Astrocyte of the cerebellum (primary cell): ENCODE measurements at regions of chr9 and their contacts with region 1.

Region 1: GRCh38 chr9:127651697-127652610 is 39.9 kb downstream of the STXBP1 start:
- DNase-seq: no peak
- H3K4me3 ChIP-seq: no peak overlapping the region
- CTCF ChIP-seq: no peak

Region 2: DNA sequence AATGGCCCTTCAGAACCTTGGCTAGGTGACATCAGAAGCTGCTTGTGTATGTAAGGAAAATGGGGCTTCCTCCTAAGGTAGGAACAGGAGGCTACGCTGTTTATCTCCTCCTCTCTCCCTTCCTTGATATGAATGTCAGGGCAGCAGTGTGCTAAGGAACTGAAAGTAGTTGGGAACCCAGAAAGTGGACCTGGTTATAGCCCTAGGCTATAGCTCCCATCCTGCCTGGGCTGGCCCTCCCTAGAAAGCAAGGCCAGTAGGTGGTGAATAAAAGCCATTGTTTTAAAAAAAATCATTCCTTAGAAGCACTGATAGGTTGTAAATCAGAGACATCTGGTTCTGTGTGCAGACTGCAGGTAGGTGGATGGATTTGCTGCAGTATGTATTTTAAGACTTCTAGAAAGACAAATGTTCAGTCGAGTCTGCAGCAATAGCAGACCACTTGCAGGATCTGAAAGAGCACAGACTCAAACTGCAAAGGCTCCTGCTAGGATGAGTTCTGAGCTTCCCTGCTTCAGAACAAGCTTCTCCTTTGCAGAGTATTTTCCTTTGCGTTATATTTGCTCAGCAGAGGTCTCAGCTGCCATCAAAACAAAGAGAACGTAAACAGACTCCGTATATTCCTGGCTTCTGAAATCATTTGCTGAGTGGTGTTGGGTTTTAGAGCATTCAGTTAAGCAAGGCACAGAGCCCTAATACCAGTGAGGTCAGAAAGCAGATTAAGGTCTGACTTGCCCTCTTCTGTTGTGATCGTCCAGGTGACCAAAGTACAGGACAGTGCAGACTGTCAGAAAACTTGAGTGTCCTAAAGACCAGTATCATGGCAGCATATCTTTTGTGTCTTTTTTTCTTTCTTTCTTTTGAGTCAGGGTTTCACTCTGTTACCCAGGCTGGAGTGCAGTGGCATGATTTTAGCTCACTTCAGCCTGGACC is 34.8 kb after region 1 on chr9:
- in situ Hi-C with region 1: loop called (anchors 5 kb)
- DNase-seq: no peak
- H3K4me3 ChIP-seq: no peak overlapping the region
- CTCF ChIP-seq: no peak